Activated naive CD4-positive, alpha-beta T cell treated with anti-CD3 and anti-CD28 coated beads, Interleukin-2, amount 10 ng/mL, durations not matched to agents 7 days and 5 days (primary cell): ENCODE measurements at regions of chr9 and their contacts with region 1.

Region 1: GRCh38 chr9:94656200-94656599 is 16.9 kb upstream of the FBP1 start:
- DNase-seq: peak; percentile 67
- H3K4me3 Mint-ChIP-seq: peak overlapping the region; percentile 44
- H3K27ac Mint-ChIP-seq: peak overlapping the region; percentile 78
- H3K4me1 Mint-ChIP-seq: peaks cover 18% of the 10 kb centered on the region
- H3K27me3 Mint-ChIP-seq: peaks cover 27% of the 10 kb centered on the region

Region 2: DNA sequence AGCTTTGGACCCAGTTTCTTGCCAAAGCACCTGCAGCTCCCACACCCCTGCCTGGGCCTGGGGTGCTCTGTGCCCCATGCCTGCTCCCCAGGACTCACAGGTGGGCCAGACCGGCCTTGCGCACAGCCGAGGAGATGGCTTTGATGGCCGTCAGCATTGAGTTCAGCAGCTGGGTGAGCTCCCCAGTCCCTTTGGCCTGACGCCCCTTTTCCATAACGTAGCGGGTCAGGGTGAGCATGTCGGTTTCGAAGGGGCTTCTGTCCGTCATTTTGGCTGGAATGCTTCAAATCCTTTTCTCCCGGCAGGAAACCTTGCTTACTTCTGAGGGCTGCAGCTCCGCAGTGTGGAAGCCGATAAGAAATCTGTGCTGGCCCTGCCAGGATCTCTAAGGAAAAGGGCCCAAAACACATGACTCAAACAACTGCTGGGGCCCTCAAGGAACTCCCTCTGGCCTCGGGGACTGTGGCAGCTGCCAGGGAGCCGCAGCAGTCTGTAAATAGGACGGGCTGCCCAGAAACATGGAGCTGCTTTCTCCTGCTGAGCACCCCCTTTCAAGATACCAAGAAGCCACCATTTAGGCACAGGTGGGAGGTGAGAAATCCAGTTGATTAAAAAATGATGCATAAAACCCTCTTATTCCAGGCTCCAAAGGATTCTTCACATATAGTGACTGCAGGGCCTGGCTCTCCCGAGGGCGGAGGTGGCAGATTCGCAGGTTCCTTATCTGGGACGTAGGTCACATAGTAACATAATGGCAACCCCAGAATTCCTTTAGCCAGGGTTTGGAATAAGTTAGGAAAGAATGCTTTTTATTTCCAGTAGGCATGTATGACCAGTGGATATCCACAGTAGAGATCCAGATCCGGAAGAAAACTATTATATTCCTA is 62.5 kb before region 1 on chr9 and contains the start of gene FBP2:
- CTCF ChIA-PET with region 1: no interaction called
- DNase-seq: no peak
- H3K4me3 Mint-ChIP-seq: no peak within 1 kb of the TSS
- H3K27ac Mint-ChIP-seq: no peak within 1 kb of the TSS
- H3K4me1 Mint-ChIP-seq: no peaks in the 10 kb centered on the region
- H3K27me3 Mint-ChIP-seq: peaks cover 17% of the 10 kb centered on the region

Region 3: GRCh38 chr9:94668418-94668932 is 12.3 kb after region 1 on chr9:
- CTCF ChIA-PET with region 1: interaction called, 15 read pairs
- DNase-seq: no peak
- H3K4me3 Mint-ChIP-seq: no peak overlapping the region
- H3K27ac Mint-ChIP-seq: no peak overlapping the region
- H3K4me1 Mint-ChIP-seq: peaks cover 17% of the 10 kb centered on the region
- H3K27me3 Mint-ChIP-seq: peaks cover 21% of the 10 kb centered on the region

Region 4: GRCh38 chr9:94945197-94946144 is 289.3 kb after region 1 on chr9:
- CTCF ChIA-PET with region 1: no interaction called
- DNase-seq: no peak
- H3K4me3 Mint-ChIP-seq: no peak overlapping the region
- H3K27ac Mint-ChIP-seq: no peak overlapping the region
- H3K4me1 Mint-ChIP-seq: peaks cover 8% of the 10 kb centered on the region
- H3K27me3 Mint-ChIP-seq: peaks cover 4% of the 10 kb centered on the region